ENCODE measurements at regions of chr9 and their contacts with region 1.

Region 1: DNA sequence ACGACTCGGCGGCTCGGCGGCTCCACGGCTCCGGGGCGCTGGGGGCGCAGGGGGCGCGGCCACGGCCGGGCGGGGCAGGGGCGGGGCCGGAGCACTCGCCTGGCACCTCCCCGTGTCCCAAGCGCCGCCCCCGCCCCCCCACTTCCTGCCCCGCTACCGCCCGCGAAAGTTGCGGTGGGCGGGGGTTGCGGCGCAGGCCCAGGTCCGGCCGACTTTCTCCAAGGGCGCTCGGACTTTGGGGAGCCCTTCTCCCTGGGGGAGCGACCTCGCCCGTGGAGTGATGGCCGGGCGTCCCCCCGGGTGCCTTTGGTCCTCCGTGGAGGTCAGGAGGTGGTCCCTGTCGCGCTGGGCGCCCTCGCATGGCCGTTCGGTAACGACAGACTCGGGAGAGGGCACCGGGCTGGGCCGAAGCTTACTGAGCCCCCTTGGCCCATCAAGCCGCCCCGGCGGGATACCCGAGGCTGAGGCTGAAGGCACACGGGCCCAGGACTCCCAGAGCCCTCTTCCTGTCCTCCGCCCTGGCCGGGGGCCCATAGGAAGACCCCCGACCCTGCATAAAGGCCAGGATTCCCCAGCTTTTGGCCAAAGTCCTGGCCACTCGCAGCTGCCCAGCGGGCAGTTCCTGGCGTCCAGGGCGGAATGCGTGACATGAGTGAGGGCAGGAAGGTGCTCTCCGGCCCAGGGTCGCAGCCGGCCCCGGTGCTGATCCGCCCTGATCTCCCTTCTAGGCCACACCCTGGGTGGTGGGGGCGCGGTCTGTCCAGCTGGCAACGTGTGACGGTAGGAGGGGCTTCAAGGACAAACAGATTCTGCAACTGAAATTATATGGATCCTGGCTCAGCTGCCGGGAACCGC is 883 bp upstream of the VAV2 start:
- DNase-seq: peak; percentile 66 to 82
- H3K4me3 ChIP-seq: peak overlapping the region; percentile 98
- H3K27ac ChIP-seq: peak overlapping the region; percentile 65
- H3K4me1 ChIP-seq: peaks cover 17% of the 10 kb centered on the region
- H3K27me3 ChIP-seq: no peaks in the 10 kb centered on the region
- CTCF ChIP-seq: peak; percentile 63

Region 2: DNA sequence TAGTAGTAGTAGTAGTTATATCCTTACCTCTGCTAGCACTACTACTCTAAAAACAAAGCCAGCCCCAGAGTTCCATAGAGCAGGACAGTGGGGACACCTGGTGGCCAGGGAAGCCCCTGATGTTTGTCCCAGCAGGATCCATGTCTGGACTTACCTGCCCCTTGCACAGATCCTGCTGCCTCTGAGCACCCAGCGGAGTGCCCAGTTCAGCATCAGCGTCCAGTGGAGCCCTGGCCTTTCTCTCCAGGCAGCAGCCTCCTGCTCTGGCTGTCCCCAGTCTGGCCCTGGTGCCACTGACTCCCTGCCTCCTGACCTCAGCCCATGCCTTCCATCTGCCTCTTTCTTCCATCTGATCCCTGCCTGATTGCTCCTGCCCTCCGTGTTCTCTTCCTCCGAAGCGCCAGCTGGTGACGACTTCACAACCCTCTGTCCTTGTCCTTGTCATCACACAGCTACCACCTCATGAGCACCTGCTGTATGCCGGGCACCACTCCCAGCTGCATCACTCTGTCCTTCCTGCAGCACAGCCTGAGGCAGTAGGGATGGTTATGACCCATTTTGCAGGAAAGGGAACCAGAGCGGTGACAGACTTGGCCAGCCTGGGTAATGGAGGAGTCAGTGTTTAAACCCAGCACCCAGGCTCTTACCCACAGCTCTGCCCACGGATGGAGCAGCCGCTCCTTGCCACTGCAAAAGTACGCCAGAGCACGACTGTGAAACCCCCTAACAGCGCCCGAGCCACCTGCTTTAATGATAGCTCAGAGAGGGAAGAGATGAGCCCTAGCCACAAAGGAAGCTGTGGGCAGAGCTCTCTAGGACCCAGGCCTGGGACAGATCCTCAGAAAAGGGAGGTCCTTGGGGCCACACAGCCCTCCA is 266.4 kb before region 1 on chr9:
- CTCF ChIA-PET with region 1: interaction called, 3 read pairs
- POLR2A ChIA-PET with region 1: no interaction called
- intact Hi-C with region 1: loop called (anchors 1 kb)
- DNase-seq: peak; percentile 44 to 78
- H3K4me3 ChIP-seq: no peak overlapping the region
- H3K27ac ChIP-seq: no peak overlapping the region
- H3K4me1 ChIP-seq: no peaks in the 10 kb centered on the region
- H3K27me3 ChIP-seq: peaks cover 96% of the 10 kb centered on the region
- CTCF ChIP-seq: peak; percentile 66

Region 3: GRCh38 chr9:133782157-133783130 is 210.6 kb before region 1 on chr9:
- CTCF ChIA-PET with region 1: interaction called, 27 read pairs
- POLR2A ChIA-PET with region 1: interaction called, 4 read pairs
- intact Hi-C with region 1: loop called (anchors 1 kb)
- DNase-seq: peak; percentile 42 to 76
- H3K4me3 ChIP-seq: no peak overlapping the region
- H3K27ac ChIP-seq: no peak overlapping the region
- H3K4me1 ChIP-seq: peaks cover 8% of the 10 kb centered on the region; the same call in 1 of the 2 replicates
- H3K27me3 ChIP-seq: no peaks in the 10 kb centered on the region
- CTCF ChIP-seq: peak; percentile 85

Region 4: GRCh38 chr9:133876144-133876543 is 116.9 kb before region 1 on chr9:
- CTCF ChIA-PET with region 1: interaction called, 3 read pairs
- POLR2A ChIA-PET with region 1: interaction called, 3 read pairs
- intact Hi-C with region 1: loop called (anchors 1 kb)
- DNase-seq: no peak
- H3K4me3 ChIP-seq: no peak overlapping the region
- H3K27ac ChIP-seq: no peak overlapping the region
- H3K4me1 ChIP-seq: peaks cover 55% of the 10 kb centered on the region
- H3K27me3 ChIP-seq: no peaks in the 10 kb centered on the region
- CTCF ChIP-seq: peak; percentile 50

Region 5: GRCh38 chr9:134067904-134068743 is 75.1 kb after region 1 on chr9 and contains the start of gene BRD3:
- CTCF ChIA-PET with region 1: no interaction called
- POLR2A ChIA-PET with region 1: interaction called, 6 read pairs
- intact Hi-C with region 1: loop called (anchors 2 kb)
- DNase-seq: peak; percentile 57 to 90
- H3K4me3 ChIP-seq: peak within 1 kb of the TSS; percentile 68
- H3K27ac ChIP-seq: no peak within 1 kb of the TSS
- H3K4me1 ChIP-seq: peaks cover 13% of the 10 kb centered on the region
- H3K27me3 ChIP-seq: peaks cover 42% of the 10 kb centered on the region
- CTCF ChIP-seq: no peak
- total RNA-seq, gene BRD3: 47.3 and 64.0 TPM in 2 replicates

Measured in PC-9 (cell line).